HepG2 (cell line): ENCODE measurements at regions of chr9 and their contacts with region 1.

Region 1: GRCh38 chr9:11946531-11946930 is 746.7 kb upstream of the TYRP1 start:
- DNase-seq: no peak
- ATAC-seq: no peak
- H3K4me3 ChIP-seq: no peak overlapping the region
- H3K27ac ChIP-seq: no peak overlapping the region
- H3K4me1 ChIP-seq: no peaks in the 10 kb centered on the region
- H3K27me3 ChIP-seq: no peaks in the 10 kb centered on the region
- CTCF ChIP-seq: no peak
- EP300 ChIP-seq: no peak
- POLR2A ChIP-seq: no peak
- RAD21 ChIP-seq: no peak

Region 2: DNA sequence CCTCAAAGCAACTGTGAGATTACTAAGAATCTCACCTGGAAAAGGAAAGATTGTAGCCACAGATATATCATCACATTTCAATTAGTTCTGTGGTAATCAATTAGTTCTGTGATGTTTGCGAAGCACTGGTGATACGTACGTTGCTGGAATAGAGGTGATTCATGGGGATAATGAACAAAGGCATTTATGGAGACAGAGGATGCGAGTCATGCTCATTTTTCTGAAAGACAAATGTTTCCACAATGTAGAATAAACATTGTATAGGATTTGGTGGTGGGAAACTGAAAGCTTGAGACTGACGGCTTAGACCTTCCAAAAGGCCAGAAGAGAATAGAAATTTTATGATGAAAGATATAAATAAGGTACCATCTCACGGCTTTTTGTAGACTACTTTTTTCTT is 239.3 kb after region 1 on chr9:
- CTCF ChIA-PET with region 1: no interaction called
- POLR2A ChIA-PET with region 1: no interaction called
- in situ Hi-C with region 1: no loop called
- intact Hi-C with region 1: loop called (anchors 5 kb)
- DNase-seq: no peak
- ATAC-seq: no peak
- H3K4me3 ChIP-seq: no peak overlapping the region
- H3K27ac ChIP-seq: no peak overlapping the region
- H3K4me1 ChIP-seq: no peaks in the 10 kb centered on the region
- H3K27me3 ChIP-seq: no peaks in the 10 kb centered on the region
- CTCF ChIP-seq: no peak
- EP300 ChIP-seq: no peak
- POLR2A ChIP-seq: no peak
- RAD21 ChIP-seq: no peak